Activated CD8-positive, alpha-beta memory T cell treated with anti-CD3 and anti-CD28 coated beads, Interleukin-2, amount 10 ng/mL, durations not matched to agents 7 days and 5 days (primary cell): ENCODE measurements at regions of chr17 and their contacts with region 1.

Region 1: GRCh38 chr17:64129764-64130558 is at the start of gene ERN1:
- DNase-seq: peak; percentile 92
- ATAC-seq: peak; percentile 92
- H3K4me3 Mint-ChIP-seq: peak within 1 kb of the TSS; percentile 82
- H3K27ac Mint-ChIP-seq: peak within 1 kb of the TSS; percentile 89
- H3K4me1 Mint-ChIP-seq: peaks cover 41% of the 10 kb centered on the region
- H3K27me3 Mint-ChIP-seq: no peaks in the 10 kb centered on the region
- total RNA-seq, gene ERN1: 21.7 to 22.9 TPM

Region 2: DNA sequence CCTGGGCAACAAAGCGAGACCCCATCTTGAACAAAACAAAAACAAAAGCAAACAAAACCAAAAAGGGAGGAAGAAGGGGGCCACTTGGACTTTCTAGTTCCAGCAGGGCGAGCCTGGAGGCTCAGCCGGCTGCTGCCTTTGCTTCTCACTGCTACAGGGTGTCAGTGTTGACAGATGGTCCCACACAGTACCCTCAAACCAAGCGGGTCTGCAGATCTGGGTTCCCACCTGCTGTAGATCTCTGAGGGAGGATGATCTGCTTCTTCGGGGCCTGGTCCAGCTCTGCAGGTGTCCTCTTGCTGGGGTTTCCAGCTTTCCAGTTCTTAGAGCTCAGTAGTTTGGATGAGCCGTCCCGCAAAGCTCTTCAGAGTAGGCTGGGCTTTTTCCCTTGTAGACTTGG is 225.6 kb before region 1 on chr17:
- CTCF ChIA-PET with region 1: interaction called, 28 read pairs
- DNase-seq: no peak
- ATAC-seq: no peak
- H3K4me3 Mint-ChIP-seq: no peak overlapping the region
- H3K27ac Mint-ChIP-seq: no peak overlapping the region
- H3K4me1 Mint-ChIP-seq: peaks cover 5% of the 10 kb centered on the region
- H3K27me3 Mint-ChIP-seq: peaks cover 43% of the 10 kb centered on the region

Region 3: DNA sequence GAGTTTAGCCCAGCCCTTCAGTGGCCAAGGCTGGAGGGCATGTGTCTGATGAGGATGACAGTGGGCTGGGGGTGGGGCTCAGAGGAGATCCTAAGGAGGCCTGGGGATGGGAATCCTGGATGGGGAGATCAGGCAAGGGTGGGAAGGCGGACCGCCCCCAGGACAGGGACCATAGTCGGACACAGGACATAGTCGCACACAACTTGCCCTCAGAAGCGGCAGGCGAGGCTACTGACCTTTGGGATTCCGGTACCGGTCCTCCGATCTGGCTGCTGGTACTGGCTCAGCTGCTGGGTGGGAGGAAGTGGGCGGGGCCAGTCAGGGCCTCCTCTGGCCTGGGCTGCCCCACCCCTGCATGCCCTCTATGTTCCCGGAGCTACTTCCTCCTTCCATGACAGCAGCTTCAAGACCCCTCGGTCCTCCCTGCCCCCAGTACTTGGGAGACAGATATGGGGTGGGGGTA is 198.8 kb before region 1 on chr17:
- CTCF ChIA-PET with region 1: interaction called, 11 read pairs
- DNase-seq: peak; percentile 82
- ATAC-seq: peak; percentile 88
- H3K4me3 Mint-ChIP-seq: peak overlapping the region; percentile 81
- H3K27ac Mint-ChIP-seq: peak overlapping the region; percentile 86
- H3K4me1 Mint-ChIP-seq: peaks cover 20% of the 10 kb centered on the region
- H3K27me3 Mint-ChIP-seq: peaks cover 7% of the 10 kb centered on the region

Region 4: DNA sequence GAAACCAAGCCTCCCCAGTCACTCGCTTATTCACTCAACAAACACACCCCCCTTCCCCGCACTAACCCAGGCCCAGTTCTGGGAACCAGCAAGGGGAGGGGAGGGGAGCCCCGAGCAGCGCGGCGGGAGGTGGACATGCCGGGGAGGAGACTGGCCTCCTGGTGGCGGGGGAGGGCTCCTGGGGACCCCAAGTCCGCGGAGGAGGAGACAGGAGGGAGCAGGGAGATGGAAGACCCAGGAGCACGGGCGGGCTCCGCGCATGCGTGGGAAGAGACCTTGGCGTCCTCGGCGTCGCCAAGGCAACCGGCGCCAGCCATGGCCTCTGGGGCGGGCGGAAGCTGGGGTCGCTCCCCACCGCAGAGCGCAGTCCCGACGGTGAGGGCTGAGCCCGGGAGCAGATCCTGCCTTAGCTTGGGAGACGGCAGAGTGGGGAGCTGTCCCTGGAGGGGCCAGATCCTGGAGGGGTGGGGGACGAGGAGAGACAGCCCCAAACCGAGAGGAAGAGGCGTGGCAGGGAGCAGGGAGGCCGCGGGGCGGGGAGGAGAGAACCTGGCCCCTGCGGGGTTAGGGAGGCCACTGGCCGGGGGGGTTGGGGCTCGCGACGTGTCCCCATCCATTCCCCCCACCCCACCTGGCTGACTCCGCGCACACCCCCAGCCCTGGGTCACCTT is 131.8 kb before region 1 on chr17 and contains the start of gene PRR29:
- CTCF ChIA-PET with region 1: interaction called, 10 read pairs
- DNase-seq: peak; percentile 86
- ATAC-seq: peak; percentile 84
- H3K4me3 Mint-ChIP-seq: peak within 1 kb of the TSS; percentile 87
- H3K27ac Mint-ChIP-seq: peak within 1 kb of the TSS; percentile 33
- H3K4me1 Mint-ChIP-seq: peaks cover 32% of the 10 kb centered on the region
- H3K27me3 Mint-ChIP-seq: peaks cover 4% of the 10 kb centered on the region
- total RNA-seq, gene PRR29: 1.5 to 3.3 TPM

Region 5: GRCh38 chr17:64051153-64051552 is 78.8 kb before region 1 on chr17:
- CTCF ChIA-PET with region 1: interaction called, 24 read pairs
- DNase-seq: peak; percentile 58
- ATAC-seq: peak; percentile 99
- H3K4me3 Mint-ChIP-seq: no peak overlapping the region
- H3K27ac Mint-ChIP-seq: peak overlapping the region; percentile 82
- H3K4me1 Mint-ChIP-seq: peaks cover 27% of the 10 kb centered on the region
- H3K27me3 Mint-ChIP-seq: no peaks in the 10 kb centered on the region

Region 6: DNA sequence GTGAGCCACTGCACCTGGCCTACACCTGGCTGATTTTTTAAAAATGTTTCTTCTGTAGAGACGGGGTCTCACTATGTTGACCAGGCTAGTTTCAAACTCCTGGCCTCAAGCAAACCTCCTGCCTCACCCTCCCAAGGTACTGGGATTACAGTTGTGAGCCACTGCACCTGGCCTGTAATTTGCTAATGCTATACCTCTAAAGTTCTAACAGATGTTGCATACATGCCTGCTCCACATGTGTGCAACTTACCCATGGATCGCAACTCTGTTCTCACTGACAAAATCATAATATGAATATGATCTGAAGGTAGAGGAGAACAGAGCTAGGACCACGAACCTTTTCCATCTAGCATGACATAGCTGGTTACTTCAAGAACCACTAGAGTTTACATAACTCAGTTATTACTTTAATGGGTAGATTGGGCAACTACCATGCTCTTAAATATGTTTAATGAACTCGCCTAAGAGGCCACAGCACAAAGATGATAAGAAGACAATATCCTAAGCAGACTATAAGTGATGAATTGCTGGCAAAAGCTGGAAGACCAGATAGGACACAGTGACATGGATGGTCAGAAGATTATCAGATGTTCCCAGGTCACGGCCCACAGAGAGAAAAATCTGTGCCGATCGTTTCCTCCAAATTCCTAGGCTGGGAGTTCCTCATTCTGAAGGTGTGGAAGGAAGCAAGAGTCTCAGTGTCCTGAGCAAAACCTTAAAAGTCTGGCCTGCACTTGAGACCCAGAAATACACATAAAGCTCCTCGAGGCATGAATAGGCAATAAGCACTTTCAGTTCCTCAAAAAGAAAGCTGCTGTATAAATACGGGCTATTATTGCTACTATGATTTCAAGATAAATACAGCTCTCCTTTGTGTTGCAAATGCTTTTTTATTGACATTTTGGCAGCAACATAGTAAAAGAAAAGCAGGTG is 55.9 kb before region 1 on chr17:
- CTCF ChIA-PET with region 1: interaction called, 19 read pairs
- DNase-seq: no peak
- ATAC-seq: no peak
- H3K4me3 Mint-ChIP-seq: no peak overlapping the region
- H3K27ac Mint-ChIP-seq: no peak overlapping the region
- H3K4me1 Mint-ChIP-seq: peaks cover 2% of the 10 kb centered on the region
- H3K27me3 Mint-ChIP-seq: no peaks in the 10 kb centered on the region

Region 7: GRCh38 chr17:64145757-64146417 is 15.9 kb after region 1 on chr17:
- CTCF ChIA-PET with region 1: interaction called, 56 read pairs
- DNase-seq: peak; percentile 99
- ATAC-seq: peak; percentile 95
- H3K4me3 Mint-ChIP-seq: no peak overlapping the region
- H3K27ac Mint-ChIP-seq: no peak overlapping the region
- H3K4me1 Mint-ChIP-seq: peaks cover 25% of the 10 kb centered on the region
- H3K27me3 Mint-ChIP-seq: no peaks in the 10 kb centered on the region